Activated CD8-positive, alpha-beta T cell treated with anti-CD3 and anti-CD28 coated beads, Interleukin-2, amount 10 ng/mL, durations not matched to agents 7 days and 5 days (primary cell): ENCODE measurements at regions of chr6 and their contacts with region 1.

Region 1: DNA sequence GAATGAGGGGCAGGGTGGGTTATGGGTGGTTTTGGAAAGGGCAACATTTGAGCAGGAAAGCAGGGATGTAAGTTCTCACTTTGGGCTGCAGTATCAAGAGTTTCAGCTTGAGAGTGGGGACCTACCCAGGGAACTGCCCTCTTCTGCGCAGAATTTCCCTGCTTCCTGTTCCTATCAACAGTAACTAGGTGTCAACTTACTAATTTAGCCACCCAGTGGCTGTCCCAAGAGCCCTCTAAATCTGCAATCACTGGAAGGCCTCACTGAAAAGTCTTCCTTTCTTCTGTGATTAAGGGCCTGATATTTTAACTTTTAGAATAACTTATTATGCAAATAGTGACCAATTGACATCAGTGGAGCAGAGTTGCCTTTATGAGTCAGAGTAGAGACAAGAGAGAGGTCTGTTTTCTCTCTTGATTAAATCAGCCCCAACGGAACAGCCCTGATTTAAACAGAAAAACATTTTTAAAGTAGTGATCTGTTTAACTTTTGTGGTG is 118.2 kb upstream of the RIPOR2 start:
- DNase-seq: no peak
- ATAC-seq: no peak
- H3K4me3 Mint-ChIP-seq: no peak overlapping the region
- H3K27ac Mint-ChIP-seq: peak overlapping the region; percentile 44
- H3K4me1 Mint-ChIP-seq: peaks cover 89% of the 10 kb centered on the region
- H3K27me3 Mint-ChIP-seq: no peaks in the 10 kb centered on the region

Region 2: DNA sequence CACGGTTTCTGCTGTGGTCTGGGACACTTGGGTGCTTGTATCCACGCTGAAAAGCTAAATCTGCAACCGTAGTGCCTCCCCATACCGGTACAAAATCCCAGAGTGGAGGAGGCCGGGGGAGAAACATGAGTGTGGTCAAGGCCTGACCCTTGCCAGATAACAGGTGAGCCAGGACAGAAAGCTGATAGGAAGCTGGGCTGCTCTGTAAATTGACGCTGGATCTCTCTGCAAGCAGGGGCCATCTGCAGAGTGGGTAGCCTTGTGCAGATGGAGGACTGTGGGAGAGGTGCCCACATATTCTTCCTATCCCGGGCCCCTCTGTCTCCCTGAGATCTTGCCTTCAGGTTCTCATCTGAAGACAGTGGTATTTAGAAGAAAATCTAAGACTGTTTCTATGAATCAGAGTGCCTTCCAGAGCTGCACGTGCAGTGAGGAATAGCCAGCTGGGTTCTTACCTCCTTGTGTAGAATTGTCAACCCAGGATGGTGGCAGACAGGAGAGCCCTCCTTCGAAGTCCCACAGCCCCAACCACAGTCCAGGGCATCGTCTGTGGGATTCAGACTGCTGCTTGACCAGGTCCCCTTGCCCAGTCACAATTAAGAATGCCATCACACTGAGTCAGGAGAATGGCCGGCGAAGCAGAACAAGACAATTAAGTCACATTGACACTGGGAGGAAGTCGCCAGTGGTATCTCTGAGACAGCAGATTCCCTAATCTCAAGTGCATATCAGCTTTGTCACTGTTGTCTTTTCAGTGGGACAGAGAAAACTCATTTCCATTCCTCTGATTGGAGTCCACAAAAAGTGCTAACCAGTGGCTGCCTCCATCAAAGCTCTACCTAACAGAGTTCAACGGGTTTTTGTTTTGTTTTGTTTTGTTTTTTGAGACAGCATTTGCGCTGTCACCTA is 18.1 kb before region 1 on chr6:
- CTCF ChIA-PET with region 1: interaction called, 37 read pairs
- POLR2A ChIA-PET with region 1: interaction called, 3 read pairs
- DNase-seq: peak; percentile 39
- ATAC-seq: peak; percentile 45
- H3K4me3 Mint-ChIP-seq: peak overlapping the region; percentile 73
- H3K27ac Mint-ChIP-seq: peak overlapping the region; percentile 81
- H3K4me1 Mint-ChIP-seq: peaks cover 68% of the 10 kb centered on the region
- H3K27me3 Mint-ChIP-seq: no peaks in the 10 kb centered on the region